ENCODE measurements at regions of chr1 and their contacts with region 1.

Region 1: DNA sequence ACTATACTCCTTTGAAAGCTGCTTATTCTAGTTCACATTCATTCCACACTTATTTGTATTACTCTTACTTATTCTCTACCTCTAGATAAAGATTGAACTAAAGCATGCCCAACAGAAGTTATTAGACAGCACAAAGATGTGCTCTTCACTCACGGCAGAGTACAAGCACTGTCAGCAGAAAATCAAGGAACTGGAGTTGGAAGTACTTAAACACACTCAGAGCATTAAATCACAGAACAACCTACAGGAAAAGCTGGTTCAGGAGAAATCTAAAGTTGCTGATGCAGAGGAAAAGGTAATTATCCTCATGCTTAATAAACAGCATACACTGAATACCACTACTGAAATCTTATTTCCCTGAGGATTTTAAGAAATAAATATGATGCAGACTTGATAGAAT is 81.3 kb upstream of the PPIH start:
- DNase-seq: no peak
- ATAC-seq: no peak
- H3K4me3 Mint-ChIP-seq: no peak overlapping the region
- H3K27ac Mint-ChIP-seq: no peak overlapping the region
- H3K4me1 Mint-ChIP-seq: no peaks in the 10 kb centered on the region
- H3K27me3 Mint-ChIP-seq: no peaks in the 10 kb centered on the region
- CTCF ChIP-seq: no peak

Region 2: GRCh38 chr1:42690477-42691156 is 113.7 kb after region 1 on chr1:
- CTCF ChIA-PET with region 1: interaction called, 3 read pairs
- POLR2A ChIA-PET with region 1: no interaction called
- intact Hi-C with region 1: loop called (anchors 2 kb)
- DNase-seq: no peak
- ATAC-seq: no peak
- H3K4me3 Mint-ChIP-seq: no peak overlapping the region
- H3K27ac Mint-ChIP-seq: no peak overlapping the region
- H3K4me1 Mint-ChIP-seq: peaks cover 85% of the 10 kb centered on the region
- H3K27me3 Mint-ChIP-seq: no peaks in the 10 kb centered on the region
- CTCF ChIP-seq: no peak

Region 3: GRCh38 chr1:42747125-42747524 is 170.2 kb after region 1 on chr1:
- CTCF ChIA-PET with region 1: interaction called, 9 read pairs
- POLR2A ChIA-PET with region 1: no interaction called
- intact Hi-C with region 1: loop called (anchors 1 kb)
- DNase-seq: peak; percentile 45
- ATAC-seq: peak; percentile 47
- H3K4me3 Mint-ChIP-seq: no peak overlapping the region
- H3K27ac Mint-ChIP-seq: no peak overlapping the region
- H3K4me1 Mint-ChIP-seq: no peaks in the 10 kb centered on the region
- H3K27me3 Mint-ChIP-seq: no peaks in the 10 kb centered on the region
- CTCF ChIP-seq: peak; percentile 18

Measured in activated B cell treated with CpG ODN at 0.5 μM for 24 hours (primary cell).